ENCODE measurements at regions of chr5 and their contacts with region 1.

Region 1: DNA sequence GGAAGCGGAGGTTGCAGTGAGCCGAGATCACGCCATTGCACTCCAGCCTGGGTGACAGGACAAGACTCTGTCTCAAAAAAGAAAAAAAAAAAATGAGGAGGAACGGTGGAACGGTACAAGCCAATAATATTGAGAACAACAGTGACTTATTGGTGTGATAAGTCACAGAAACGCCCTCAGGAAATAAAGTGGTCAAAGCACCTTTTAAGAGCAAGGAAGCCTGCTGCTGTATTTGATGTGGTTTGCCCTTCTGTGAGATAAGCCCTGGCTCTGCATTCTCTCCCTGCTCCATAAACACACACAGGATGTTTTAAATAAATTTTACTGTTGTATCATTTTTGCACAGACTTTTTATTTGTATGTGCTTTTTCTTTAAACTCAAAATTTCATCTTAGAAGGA is 269.9 kb upstream of the MSX2 start:
- DNase-seq: no peak
- H3K4me3 ChIP-seq: no peak overlapping the region
- H3K27ac ChIP-seq: no peak overlapping the region
- H3K4me1 ChIP-seq: no peaks in the 10 kb centered on the region
- H3K27me3 ChIP-seq: no peaks in the 10 kb centered on the region
- CTCF ChIP-seq: no peak
- EP300 ChIP-seq: no peak
- POLR2A ChIP-seq: no peak
- RAD21 ChIP-seq: no peak

Region 2: GRCh38 chr5:174464504-174465165 is 10.2 kb after region 1 on chr5:
- CTCF ChIA-PET with region 1: interaction called, 11 read pairs
- POLR2A ChIA-PET with region 1: no interaction called
- DNase-seq: no peak
- H3K4me3 ChIP-seq: no peak overlapping the region
- H3K27ac ChIP-seq: no peak overlapping the region
- H3K4me1 ChIP-seq: peaks cover 0 to 6% (median 2%) of the 10 kb centered on the region in 4 experiments; a peak in 5 of 7 replicates
- H3K27me3 ChIP-seq: no peaks in the 10 kb centered on the region
- CTCF ChIP-seq: peak in 1 of 3 experiments; percentile 11; a peak in 1 of 4 replicates
- EP300 ChIP-seq: no peak
- POLR2A ChIP-seq: no peak
- RAD21 ChIP-seq: 0 out of 4 replicates have a peak, but pooled peaks of 1 of the 2 experiments have one; percentile 11